Psoas muscle (tissue), 8 donors: ENCODE measurements at regions of chr5 and their contacts with region 1.

Region 1: GRCh38 chr5:139765409-139766217 is 30.0 kb upstream of the PSD2 start:
- DNase-seq: peak; percentile 80 to 91
- ATAC-seq: peak; percentile 87 to 96 (median 92)
- H3K4me3 ChIP-seq: peak overlapping the region; percentile 76
- H3K27ac ChIP-seq: no peak overlapping the region
- H3K4me1 ChIP-seq: no peaks in the 10 kb centered on the region
- H3K27me3 ChIP-seq: peaks cover 0 to 20% (median 0%) of the 10 kb centered on the region in 3 donors
- CTCF ChIP-seq: peak; percentile 94

Region 2: DNA sequence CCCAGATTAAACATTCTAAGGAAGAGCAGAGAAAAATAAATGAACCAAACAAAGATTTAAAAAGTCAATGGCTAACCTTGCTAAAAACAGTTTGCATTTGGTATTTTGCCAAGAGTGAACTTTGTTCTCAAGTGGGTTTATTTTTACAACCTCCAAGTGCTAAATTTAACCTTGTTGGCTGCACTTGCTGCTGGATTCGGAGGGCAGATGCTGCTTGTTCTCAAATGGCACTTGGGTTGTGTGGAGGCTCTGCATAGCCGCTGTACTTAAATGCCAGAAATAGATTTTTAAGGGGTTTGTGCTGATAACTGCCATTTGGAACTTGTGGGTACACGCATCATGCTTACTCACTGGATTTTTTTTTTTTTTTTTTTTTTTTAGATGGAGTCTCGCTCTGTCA is 348.4 kb before region 1 on chr5:
- intact Hi-C with region 1: loop called in 1 of 2 experiments (anchors 10 kb)
- DNase-seq: peak; percentile 33 to 60
- ATAC-seq: peak; percentile 50 to 79 (median 70)
- H3K4me3 ChIP-seq: no peak overlapping the region
- H3K27ac ChIP-seq: peak overlapping the region; percentile 85
- H3K4me1 ChIP-seq: peaks cover 59% of the 10 kb centered on the region
- H3K27me3 ChIP-seq: no peaks in the 10 kb centered on the region
- CTCF ChIP-seq: no peak

Region 3: GRCh38 chr5:139690064-139690802 is 75.4 kb before region 1 on chr5:
- intact Hi-C with region 1: loop called in 1 of 2 experiments (anchors 5 kb)
- DNase-seq: no peak
- ATAC-seq: peak in 3 of 4 donors; percentile 3 to 21 (median 3)
- H3K4me3 ChIP-seq: peak overlapping the region; percentile 12
- H3K27ac ChIP-seq: peak overlapping the region; percentile 34
- H3K4me1 ChIP-seq: peaks cover 67% of the 10 kb centered on the region
- H3K27me3 ChIP-seq: no peaks in the 10 kb centered on the region
- CTCF ChIP-seq: peak; percentile 63

Region 4: GRCh38 chr5:139705655-139706587 is 59.7 kb before region 1 on chr5:
- intact Hi-C with region 1: loop called in 1 of 2 experiments (anchors 1 kb)
- DNase-seq: no peak
- ATAC-seq: no peak
- H3K4me3 ChIP-seq: no peak overlapping the region
- H3K27ac ChIP-seq: no peak overlapping the region
- H3K4me1 ChIP-seq: peaks cover 17% of the 10 kb centered on the region
- H3K27me3 ChIP-seq: peaks cover 0 to 15% (median 2%) of the 10 kb centered on the region in 3 donors
- CTCF ChIP-seq: no peak

Region 5: GRCh38 chr5:139908749-139909148 is 143.1 kb after region 1 on chr5:
- intact Hi-C with region 1: no loop called
- DNase-seq: peak; percentile 46 to 68
- ATAC-seq: peak in 1 of 4 donors; percentile 24
- H3K4me3 ChIP-seq: no peak overlapping the region
- H3K27ac ChIP-seq: no peak overlapping the region
- H3K4me1 ChIP-seq: peaks cover 12% of the 10 kb centered on the region
- H3K27me3 ChIP-seq: no peaks in the 10 kb centered on the region
- CTCF ChIP-seq: no peak